K562 (cell line): ENCODE measurements at regions of chr11 and their contacts with region 1.

Region 1: GRCh38 chr11:9095421-9095820 is 4.0 kb upstream of the SCUBE2 start:
- DNase-seq: peak in 1 of 4 experiments; percentile 37
- ATAC-seq: peak; percentile 63
- H3K4me3 ChIP-seq: no peak overlapping the region
- H3K27ac ChIP-seq: no peak overlapping the region
- H3K4me1 ChIP-seq: peaks cover 6 to 16% of the 10 kb centered on the region in 2 experiments; a peak in 4 of 5 replicates
- H3K27me3 ChIP-seq: peaks cover 28 to 49% of the 10 kb centered on the region in 2 experiments
- CTCF ChIP-seq: peak; percentile 59 to 64 (median 62)
- EP300 ChIP-seq: no peak
- POLR2A ChIP-seq: no peak
- RAD21 ChIP-seq: peak; percentile 14 to 56; a peak in 3 of 4 replicates

Region 2: GRCh38 chr11:8765294-8765693 is 330.1 kb before region 1 on chr11:
- CTCF ChIA-PET with region 1: no interaction called
- POLR2A ChIA-PET with region 1: no interaction called
- in situ Hi-C with region 1: no loop called
- intact Hi-C with region 1: no loop called
- DNase-seq: no peak
- ATAC-seq: no peak
- H3K4me3 ChIP-seq: no peak overlapping the region
- H3K27ac ChIP-seq: no peak overlapping the region
- H3K4me1 ChIP-seq: peaks cover 4 to 11% of the 10 kb centered on the region in 2 experiments; a peak in 2 of 5 replicates
- H3K27me3 ChIP-seq: peaks cover 22% of the 10 kb centered on the region in 2 experiments
- CTCF ChIP-seq: no peak
- EP300 ChIP-seq: no peak
- POLR2A ChIP-seq: no peak
- RAD21 ChIP-seq: no peak

Region 3: DNA sequence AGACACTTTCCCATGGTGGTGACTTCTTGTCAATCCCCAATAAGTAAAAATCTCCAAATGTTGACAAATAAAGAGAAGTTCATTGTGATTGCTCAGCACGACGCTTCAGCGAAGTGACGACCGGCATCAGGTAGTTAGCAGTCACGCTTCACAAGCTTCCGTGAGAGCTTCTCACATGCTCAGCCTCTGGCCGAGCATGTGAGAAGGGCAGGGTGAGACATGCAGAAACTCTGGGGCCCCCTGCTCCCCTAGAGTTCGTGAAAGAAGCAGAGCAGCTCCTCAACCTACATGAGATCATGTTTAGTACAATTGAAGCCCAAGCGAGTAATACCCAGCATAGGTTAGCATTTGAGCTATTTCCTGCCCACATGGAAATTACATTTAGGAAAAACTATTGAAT is 158.3 kb before region 1 on chr11:
- CTCF ChIA-PET with region 1: no interaction called
- POLR2A ChIA-PET with region 1: no interaction called
- in situ Hi-C with region 1: no loop called
- intact Hi-C with region 1: no loop called
- DNase-seq: no peak
- ATAC-seq: no peak
- H3K4me3 ChIP-seq: no peak overlapping the region
- H3K27ac ChIP-seq: no peak overlapping the region
- H3K4me1 ChIP-seq: peaks cover 6 to 11% of the 10 kb centered on the region in 2 experiments; a peak in 4 of 5 replicates
- H3K27me3 ChIP-seq: no peaks in the 10 kb centered on the region
- CTCF ChIP-seq: no peak
- EP300 ChIP-seq: no peak
- POLR2A ChIP-seq: no peak
- RAD21 ChIP-seq: no peak

Region 4: DNA sequence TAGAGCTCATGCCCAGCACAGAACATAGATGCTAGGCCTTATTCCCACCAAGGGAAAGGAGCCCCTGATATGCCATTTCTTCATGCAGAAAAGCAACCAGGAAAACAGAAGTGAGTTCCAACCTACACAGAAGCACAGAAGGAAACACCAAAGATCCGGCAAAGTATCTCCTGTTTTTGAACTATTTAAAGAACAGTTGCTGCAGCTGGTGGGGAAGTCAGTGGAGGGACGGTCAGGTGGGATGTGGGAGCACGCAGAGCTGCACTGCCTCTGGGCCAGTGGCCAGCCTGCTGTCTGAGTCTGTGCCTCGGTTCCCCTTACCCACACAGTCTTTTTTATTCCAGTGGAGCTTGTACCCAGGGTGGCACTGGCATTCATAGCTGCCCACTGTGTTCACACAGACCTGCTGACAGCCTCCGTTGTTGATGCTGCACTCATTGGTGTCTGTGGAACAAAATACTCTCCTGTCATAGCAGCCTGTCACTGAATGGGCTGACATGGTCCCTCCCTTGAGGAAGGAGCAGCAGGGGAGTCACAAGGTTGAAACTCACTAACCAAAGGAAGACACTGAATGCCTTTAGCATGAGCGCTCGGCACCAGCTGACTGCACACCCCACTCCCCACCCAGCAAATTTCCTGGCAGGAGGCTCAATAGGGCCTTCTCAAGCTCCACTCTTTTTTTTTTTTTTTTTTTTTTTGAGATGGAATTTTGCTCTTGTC is 41.9 kb before region 1 on chr11:
- CTCF ChIA-PET with region 1: no interaction called
- POLR2A ChIA-PET with region 1: no interaction called
- in situ Hi-C with region 1: no loop called
- intact Hi-C with region 1: no loop called
- DNase-seq: no peak
- ATAC-seq: no peak
- H3K4me3 ChIP-seq: no peak overlapping the region
- H3K27ac ChIP-seq: no peak overlapping the region; the same call in 2 of the 3 replicates
- H3K4me1 ChIP-seq: no peaks in the 10 kb centered on the region
- H3K27me3 ChIP-seq: peaks cover 24 to 51% of the 10 kb centered on the region in 2 experiments
- CTCF ChIP-seq: no peak
- EP300 ChIP-seq: no peak
- POLR2A ChIP-seq: no peak
- RAD21 ChIP-seq: no peak

Region 5: GRCh38 chr11:9130297-9130696 is 34.9 kb after region 1 on chr11:
- CTCF ChIA-PET with region 1: no interaction called
- POLR2A ChIA-PET with region 1: interaction called, 3 read pairs
- in situ Hi-C with region 1: no loop called
- intact Hi-C with region 1: loop called (anchors 5 kb)
- DNase-seq: no peak
- ATAC-seq: no peak
- H3K4me3 ChIP-seq: no peak overlapping the region
- H3K27ac ChIP-seq: no peak overlapping the region
- H3K4me1 ChIP-seq: no peaks in the 10 kb centered on the region
- H3K27me3 ChIP-seq: no peaks in the 10 kb centered on the region
- CTCF ChIP-seq: no peak
- EP300 ChIP-seq: no peak
- POLR2A ChIP-seq: no peak
- RAD21 ChIP-seq: no peak